ENCODE measurements at regions of chr1 and their contacts with region 1.

Region 1: GRCh38 chr1:200628223-200628881 is 7.8 kb upstream of the KIF14 start:
- DNase-seq: no peak
- H3K4me3 Mint-ChIP-seq: no peak overlapping the region
- H3K27ac Mint-ChIP-seq: no peak overlapping the region
- H3K4me1 Mint-ChIP-seq: peaks cover 10% of the 10 kb centered on the region
- H3K27me3 Mint-ChIP-seq: no peaks in the 10 kb centered on the region
- CTCF ChIP-seq: no peak

Region 2: DNA sequence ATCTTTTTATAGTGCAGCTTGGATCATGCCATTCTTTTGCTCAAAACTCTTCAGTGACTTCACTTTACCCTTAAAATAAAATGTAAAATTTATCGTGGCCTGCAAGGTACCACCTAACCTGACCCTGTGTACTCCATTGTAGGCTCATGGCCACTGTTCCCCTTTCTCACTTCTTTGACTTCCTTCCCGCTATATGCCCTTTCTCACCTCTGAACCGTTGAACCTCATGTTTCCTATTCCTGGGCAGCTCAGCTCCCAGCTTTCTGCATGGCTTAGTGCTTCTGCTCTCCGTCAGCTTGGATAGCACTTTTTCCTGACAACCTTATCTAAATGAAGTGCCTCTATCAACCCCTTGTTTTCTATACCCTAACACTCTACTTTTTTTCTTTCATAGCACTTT is 183.4 kb after region 1 on chr1:
- CTCF ChIA-PET with region 1: interaction called, 72 read pairs
- POLR2A ChIA-PET with region 1: interaction called, 3 read pairs
- intact Hi-C with region 1: no loop called
- DNase-seq: no peak
- H3K4me3 Mint-ChIP-seq: no peak overlapping the region
- H3K27ac Mint-ChIP-seq: peak overlapping the region; percentile 0
- H3K4me1 Mint-ChIP-seq: peaks cover 17% of the 10 kb centered on the region
- H3K27me3 Mint-ChIP-seq: no peaks in the 10 kb centered on the region
- CTCF ChIP-seq: no peak

Region 3: DNA sequence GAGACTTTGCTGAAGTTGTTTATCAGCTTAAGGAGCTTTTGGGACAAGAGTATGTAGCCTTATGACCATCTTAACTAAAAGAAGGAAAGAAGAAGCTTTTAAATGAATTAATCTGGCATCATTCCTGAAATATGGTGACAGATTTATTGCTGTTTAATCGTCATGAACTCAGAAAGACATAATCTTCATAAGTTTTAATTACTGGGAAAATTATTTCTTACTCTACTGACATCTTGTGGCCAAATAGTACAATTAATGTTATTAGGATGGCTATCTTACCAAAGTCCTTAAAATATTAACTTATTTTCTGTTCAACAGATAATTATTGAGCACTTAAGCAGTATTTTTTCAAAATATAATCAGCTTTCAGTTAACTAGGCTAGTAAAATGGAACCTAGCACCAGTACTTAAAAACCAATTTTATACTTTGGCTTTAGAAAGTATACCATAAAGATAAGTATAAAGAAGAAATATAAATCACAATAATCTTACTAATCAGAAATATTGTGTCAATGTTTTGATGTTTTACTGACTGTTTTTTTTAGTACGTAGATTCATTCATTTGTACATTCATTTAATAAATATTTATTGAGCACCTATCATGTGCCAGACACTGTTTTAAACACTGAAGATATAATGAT is 209.7 kb after region 1 on chr1:
- CTCF ChIA-PET with region 1: interaction called, 84 read pairs
- POLR2A ChIA-PET with region 1: interaction called, 4 read pairs
- intact Hi-C with region 1: loop called (anchors 1 kb)
- DNase-seq: peak; percentile 45
- H3K4me3 Mint-ChIP-seq: no peak overlapping the region
- H3K27ac Mint-ChIP-seq: no peak overlapping the region
- H3K4me1 Mint-ChIP-seq: peaks cover 16% of the 10 kb centered on the region
- H3K27me3 Mint-ChIP-seq: no peaks in the 10 kb centered on the region
- CTCF ChIP-seq: peak; percentile 67

Measured in MCF 10A (cell line).